K562 (cell line): ENCODE measurements at regions of chrX and their contacts with region 1.

Region 1: DNA sequence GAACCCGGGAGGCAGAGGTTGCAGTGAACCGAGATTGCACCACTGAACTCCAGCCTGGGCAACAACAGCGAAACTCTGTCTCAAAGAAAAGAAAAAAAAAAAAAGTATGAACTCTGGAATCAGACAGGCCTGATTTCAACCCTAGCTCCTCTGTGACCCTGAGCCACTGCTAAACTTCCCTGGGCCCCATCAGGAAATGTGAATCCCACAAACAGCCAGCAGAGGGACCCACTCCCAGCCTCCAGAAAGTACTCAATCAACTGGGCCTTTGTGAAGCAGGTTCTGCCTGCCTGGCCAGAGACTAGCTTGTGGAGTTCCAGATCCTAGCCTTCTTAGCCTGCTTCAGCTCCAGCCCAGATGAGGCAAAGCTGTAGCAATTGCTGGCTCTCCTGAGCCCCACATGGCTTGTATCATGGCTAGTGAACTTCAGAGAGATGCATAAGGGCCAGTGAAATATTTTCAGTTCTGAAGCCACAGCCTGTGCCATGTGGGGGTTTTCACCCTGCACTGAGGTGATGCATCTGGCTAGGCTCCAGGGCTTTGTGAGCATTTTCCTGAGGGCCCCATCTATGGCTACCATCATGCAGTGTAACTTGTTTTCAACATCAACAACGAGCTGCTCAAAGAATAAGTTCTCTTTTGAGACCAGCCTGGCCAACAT is 7.2 kb upstream of the IDS start:
- DNase-seq: peak; percentile 58 to 76 (median 60)
- ATAC-seq: peak; percentile 87
- H3K4me3 ChIP-seq: no peak overlapping the region
- H3K27ac ChIP-seq: no peak overlapping the region
- H3K4me1 ChIP-seq: peaks cover 3 to 28% of the 10 kb centered on the region in 2 experiments; a peak in 4 of 5 replicates
- H3K27me3 ChIP-seq: peaks cover 0 to 7% of the 10 kb centered on the region in 2 experiments; a peak in 3 of 5 replicates
- CTCF ChIP-seq: peak; percentile 72 to 74 (median 72)
- EP300 ChIP-seq: no peak
- POLR2A ChIP-seq: no peak
- RAD21 ChIP-seq: peak in 1 of 2 experiments; percentile 71; a peak in 3 of 4 replicates

Region 2: GRCh38 chrX:149570672-149571071 is 58.3 kb after region 1 on chrX:
- CTCF ChIA-PET with region 1: no interaction called
- POLR2A ChIA-PET with region 1: no interaction called
- in situ Hi-C with region 1: loop called (anchors 10 kb)
- intact Hi-C with region 1: no loop called
- DNase-seq: peak in 1 of 4 experiments; percentile 2
- ATAC-seq: no peak
- H3K4me3 ChIP-seq: no peak overlapping the region
- H3K27ac ChIP-seq: no peak overlapping the region
- H3K4me1 ChIP-seq: peaks cover 0 to 3% of the 10 kb centered on the region in 2 experiments; a peak in 2 of 5 replicates
- H3K27me3 ChIP-seq: 0 out of 5 replicates have a peak, but pooled peaks cover 0 to 4% of the 10 kb centered on the region in 2 experiments
- CTCF ChIP-seq: no peak
- EP300 ChIP-seq: no peak
- POLR2A ChIP-seq: no peak
- RAD21 ChIP-seq: no peak

Region 3: DNA sequence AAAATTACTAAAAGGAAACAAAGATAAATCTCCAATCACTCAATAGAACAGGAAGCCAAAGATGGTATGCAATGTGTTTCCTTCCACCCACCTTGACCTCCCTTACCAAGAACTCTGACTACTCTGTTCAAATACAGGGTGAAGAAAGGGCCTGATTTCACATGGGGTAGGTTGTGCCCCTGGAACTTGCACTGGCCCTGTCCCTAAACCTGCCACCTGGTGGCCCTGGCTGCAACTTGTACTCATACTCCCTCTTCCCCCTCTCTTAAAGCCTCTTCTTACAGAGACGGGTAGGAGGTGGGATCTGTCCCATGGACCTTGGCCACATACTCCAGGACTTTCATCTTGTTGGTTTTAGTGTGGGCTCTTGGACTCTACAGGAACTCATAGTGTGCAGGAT is 136.6 kb after region 1 on chrX:
- CTCF ChIA-PET with region 1: no interaction called
- POLR2A ChIA-PET with region 1: no interaction called
- in situ Hi-C with region 1: loop called (anchors 25 kb)
- intact Hi-C with region 1: loop called (anchors 10 kb)
- DNase-seq: no peak
- ATAC-seq: peak; percentile 75
- H3K4me3 ChIP-seq: no peak overlapping the region
- H3K27ac ChIP-seq: no peak overlapping the region
- H3K4me1 ChIP-seq: no peaks in the 10 kb centered on the region
- H3K27me3 ChIP-seq: peaks cover 0 to 19% of the 10 kb centered on the region in 2 experiments; a peak in 2 of 5 replicates
- CTCF ChIP-seq: peak; percentile 14 to 19 (median 16); a peak in 1 of 6 replicates
- EP300 ChIP-seq: no peak
- POLR2A ChIP-seq: no peak
- RAD21 ChIP-seq: 0 out of 4 replicates have a peak, but pooled peaks of 1 of the 2 experiments have one; percentile 31

Region 4: GRCh38 chrX:149898554-149898953 is 386.2 kb after region 1 on chrX:
- CTCF ChIA-PET with region 1: no interaction called
- POLR2A ChIA-PET with region 1: no interaction called
- in situ Hi-C with region 1: no loop called
- intact Hi-C with region 1: no loop called
- DNase-seq: no peak
- ATAC-seq: no peak; the same call in 2 of the 3 replicates
- H3K4me3 ChIP-seq: no peak overlapping the region
- H3K27ac ChIP-seq: no peak overlapping the region
- H3K4me1 ChIP-seq: peaks cover 0 to 2% of the 10 kb centered on the region in 2 experiments; a peak in 2 of 5 replicates
- H3K27me3 ChIP-seq: no peaks in the 10 kb centered on the region
- CTCF ChIP-seq: no peak
- EP300 ChIP-seq: no peak
- POLR2A ChIP-seq: no peak
- RAD21 ChIP-seq: no peak

Region 5: GRCh38 chrX:149982310-149982709 is 470.0 kb after region 1 on chrX:
- CTCF ChIA-PET with region 1: no interaction called
- POLR2A ChIA-PET with region 1: no interaction called
- in situ Hi-C with region 1: no loop called
- intact Hi-C with region 1: no loop called
- DNase-seq: no peak
- ATAC-seq: no peak
- H3K4me3 ChIP-seq: no peak overlapping the region
- H3K27ac ChIP-seq: no peak overlapping the region
- H3K4me1 ChIP-seq: no peaks in the 10 kb centered on the region
- H3K27me3 ChIP-seq: no peaks in the 10 kb centered on the region
- CTCF ChIP-seq: no peak
- EP300 ChIP-seq: no peak
- POLR2A ChIP-seq: no peak
- RAD21 ChIP-seq: no peak